ENCODE measurements at regions of chr3 and their contacts with region 1.

Region 1: GRCh38 chr3:129627429-129628168 is 21.1 kb upstream of the PLXND1 start:
- DNase-seq: peak; percentile 88
- H3K4me3 Mint-ChIP-seq: peak overlapping the region; percentile 94
- H3K27ac Mint-ChIP-seq: peak overlapping the region; percentile 91
- H3K4me1 Mint-ChIP-seq: peaks cover 20% of the 10 kb centered on the region
- H3K27me3 Mint-ChIP-seq: peaks cover 11% of the 10 kb centered on the region

Region 2: DNA sequence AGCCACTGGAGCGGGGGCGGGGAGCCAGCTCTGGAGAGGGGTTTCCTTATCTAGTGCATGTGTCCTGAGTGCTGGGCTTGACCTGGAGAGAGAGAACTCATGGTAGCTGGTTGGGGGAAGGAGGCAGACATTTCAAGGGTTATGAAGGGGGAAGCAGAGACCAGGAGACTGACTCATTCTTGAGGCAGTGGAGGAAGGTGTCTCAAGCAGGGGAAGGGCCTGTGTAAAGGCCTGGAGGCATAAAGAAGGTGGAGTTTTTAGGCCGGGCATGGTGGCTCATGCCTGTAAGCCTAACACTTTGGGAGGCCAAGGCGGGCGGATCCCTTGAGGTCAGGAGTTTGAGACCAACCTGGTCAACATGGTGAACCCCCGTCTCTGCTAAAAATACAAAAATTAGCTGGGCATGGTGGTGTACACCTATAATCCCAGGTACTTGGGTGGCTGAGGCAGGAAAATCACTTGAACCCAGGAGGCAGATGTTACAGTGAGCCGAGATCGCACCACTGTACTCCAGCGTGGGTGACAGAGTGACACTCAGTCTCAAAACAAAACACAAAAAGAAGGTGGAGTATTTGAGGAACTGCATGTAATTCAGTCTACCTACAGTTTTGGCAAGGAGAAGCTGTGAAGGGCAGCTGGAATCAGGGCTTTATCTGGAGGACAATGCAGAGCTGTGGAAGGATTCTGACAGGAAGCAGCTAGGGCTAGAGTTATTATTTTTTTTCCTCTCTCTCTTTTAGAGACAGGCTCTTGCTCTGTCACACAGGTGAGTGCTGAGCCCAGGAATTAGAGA is 78.0 kb before region 1 on chr3:
- intact Hi-C with region 1: no loop called
- DNase-seq: no peak
- H3K4me3 Mint-ChIP-seq: no peak overlapping the region
- H3K27ac Mint-ChIP-seq: no peak overlapping the region
- H3K4me1 Mint-ChIP-seq: no peaks in the 10 kb centered on the region
- H3K27me3 Mint-ChIP-seq: peaks cover 14% of the 10 kb centered on the region

Region 3: GRCh38 chr3:129745253-129745652 is 117.7 kb after region 1 on chr3:
- intact Hi-C with region 1: no loop called
- DNase-seq: no peak
- H3K4me3 Mint-ChIP-seq: no peak overlapping the region
- H3K27ac Mint-ChIP-seq: no peak overlapping the region
- H3K4me1 Mint-ChIP-seq: peaks cover 6% of the 10 kb centered on the region
- H3K27me3 Mint-ChIP-seq: no peaks in the 10 kb centered on the region

Region 4: GRCh38 chr3:129893581-129894070 is 266.0 kb after region 1 on chr3 and contains the start of gene TMCC1:
- intact Hi-C with region 1: loop called (anchors 2 kb)
- DNase-seq: peak; percentile 97
- H3K4me3 Mint-ChIP-seq: peak within 1 kb of the TSS; percentile 92
- H3K27ac Mint-ChIP-seq: peak within 1 kb of the TSS; percentile 90
- H3K4me1 Mint-ChIP-seq: peaks cover 36% of the 10 kb centered on the region
- H3K27me3 Mint-ChIP-seq: no peaks in the 10 kb centered on the region
- total RNA-seq, gene TMCC1: 19.2 and 21.0 TPM in 2 replicates

Region 5: GRCh38 chr3:129934234-129935123 is 306.9 kb after region 1 on chr3:
- intact Hi-C with region 1: loop called (anchors 1 kb)
- DNase-seq: peak; percentile 73
- H3K4me3 Mint-ChIP-seq: no peak overlapping the region
- H3K27ac Mint-ChIP-seq: no peak overlapping the region
- H3K4me1 Mint-ChIP-seq: peaks cover 6% of the 10 kb centered on the region
- H3K27me3 Mint-ChIP-seq: peaks cover 7% of the 10 kb centered on the region

Region 6: GRCh38 chr3:129994883-129995559 is 367.4 kb after region 1 on chr3:
- intact Hi-C with region 1: loop called (anchors 5 kb)
- DNase-seq: no peak
- H3K4me3 Mint-ChIP-seq: no peak overlapping the region
- H3K27ac Mint-ChIP-seq: no peak overlapping the region
- H3K4me1 Mint-ChIP-seq: no peaks in the 10 kb centered on the region
- H3K27me3 Mint-ChIP-seq: peaks cover 37% of the 10 kb centered on the region